GM12878 (cell line): ENCODE measurements at regions of chr5 and their contacts with region 1.

Region 1: GRCh38 chr5:44935262-44935661 is 126.5 kb downstream of the MRPS30 start:
- DNase-seq: no peak
- ATAC-seq: peak; percentile 59
- H3K4me3 ChIP-seq: no peak overlapping the region
- H3K27ac ChIP-seq: no peak overlapping the region
- H3K4me1 ChIP-seq: peaks cover 5% of the 10 kb centered on the region; the same call in 1 of the 2 replicates
- H3K27me3 ChIP-seq: no peaks in the 10 kb centered on the region
- CTCF ChIP-seq: peak; percentile 23 to 39 (median 31); a peak in 5 of 6 replicates
- EP300 ChIP-seq: no peak
- POLR2A ChIP-seq: no peak
- RAD21 ChIP-seq: peak; percentile 52

Region 2: DNA sequence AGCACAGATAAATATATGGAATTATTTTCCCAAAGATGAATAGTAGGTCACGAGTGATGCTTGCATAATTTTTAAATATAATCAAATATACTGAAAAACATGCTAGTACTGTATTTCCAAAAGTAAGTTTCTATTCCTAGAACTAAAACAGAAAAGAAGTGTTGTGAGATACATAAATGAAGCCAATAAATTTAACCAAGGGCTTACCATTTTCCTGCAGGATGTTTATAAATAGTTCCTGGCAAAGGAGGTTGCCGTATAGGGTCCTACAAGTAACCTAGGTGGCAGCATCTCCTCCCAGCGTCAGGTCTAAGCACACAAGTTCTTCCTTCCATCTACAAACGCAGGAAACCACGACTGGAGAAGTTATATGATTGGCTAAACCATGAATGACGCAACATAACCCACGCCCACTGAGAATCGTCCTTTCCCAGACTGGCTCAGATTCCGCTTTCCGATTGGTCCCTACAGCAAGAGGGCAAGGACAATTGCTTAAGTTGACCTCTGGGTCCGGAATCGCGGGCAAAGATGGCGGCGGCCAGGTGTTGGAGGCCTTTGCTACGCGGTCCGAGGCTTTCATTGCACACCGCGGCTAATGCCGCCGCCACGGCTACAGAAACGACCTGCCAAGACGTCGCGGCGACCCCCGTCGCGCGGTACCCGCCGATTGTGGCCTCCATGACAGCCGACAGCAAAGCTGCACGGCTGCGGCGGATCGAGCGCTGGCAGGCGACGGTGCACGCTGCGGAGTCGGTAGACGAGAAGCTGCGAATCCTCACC is 126.6 kb before region 1 on chr5 and contains the start of gene MRPS30:
- CTCF ChIA-PET with region 1: no interaction called
- POLR2A ChIA-PET with region 1: no interaction called
- RAD21 ChIA-PET with region 1: no interaction called
- SMC1A ChIA-PET with region 1: no interaction called
- in situ Hi-C with region 1: no loop called
- intact Hi-C with region 1: loop called (anchors 10 kb)
- DNase-seq: peak; percentile 100
- ATAC-seq: peak; percentile 95
- H3K4me3 ChIP-seq: peak within 1 kb of the TSS; percentile 90
- H3K27ac ChIP-seq: peak within 1 kb of the TSS; percentile 84
- H3K4me1 ChIP-seq: peaks cover 3% of the 10 kb centered on the region; the same call in 1 of the 2 replicates
- H3K27me3 ChIP-seq: no peaks in the 10 kb centered on the region
- CTCF ChIP-seq: peak; percentile 36 to 57 (median 46); a peak in 4 of 6 replicates
- EP300 ChIP-seq: no peak
- POLR2A ChIP-seq: peak; percentile 96
- RAD21 ChIP-seq: no peak; the same call in 1 of the 2 replicates
- polyA plus RNA-seq, gene MRPS30: 18.5 to 19.8 TPM

Region 3: GRCh38 chr5:44909004-44909403 is 26.3 kb before region 1 on chr5:
- CTCF ChIA-PET with region 1: no interaction called
- POLR2A ChIA-PET with region 1: no interaction called
- RAD21 ChIA-PET with region 1: no interaction called
- SMC1A ChIA-PET with region 1: no interaction called
- in situ Hi-C with region 1: no loop called
- intact Hi-C with region 1: no loop called
- DNase-seq: no peak
- ATAC-seq: no peak
- H3K4me3 ChIP-seq: no peak overlapping the region
- H3K27ac ChIP-seq: no peak overlapping the region
- H3K4me1 ChIP-seq: no peaks in the 10 kb centered on the region
- H3K27me3 ChIP-seq: no peaks in the 10 kb centered on the region
- CTCF ChIP-seq: no peak
- EP300 ChIP-seq: no peak
- POLR2A ChIP-seq: no peak
- RAD21 ChIP-seq: no peak

Region 4: GRCh38 chr5:44919560-44919959 is 15.7 kb before region 1 on chr5:
- CTCF ChIA-PET with region 1: no interaction called
- POLR2A ChIA-PET with region 1: no interaction called
- RAD21 ChIA-PET with region 1: no interaction called
- SMC1A ChIA-PET with region 1: no interaction called
- in situ Hi-C with region 1: no loop called
- intact Hi-C with region 1: no loop called
- DNase-seq: no peak
- ATAC-seq: no peak
- H3K4me3 ChIP-seq: no peak overlapping the region
- H3K27ac ChIP-seq: no peak overlapping the region
- H3K4me1 ChIP-seq: no peaks in the 10 kb centered on the region
- H3K27me3 ChIP-seq: no peaks in the 10 kb centered on the region
- CTCF ChIP-seq: no peak
- EP300 ChIP-seq: no peak
- POLR2A ChIP-seq: no peak
- RAD21 ChIP-seq: no peak

Region 5: GRCh38 chr5:45796959-45797553 is 861.8 kb after region 1 on chr5:
- CTCF ChIA-PET with region 1: no interaction called
- POLR2A ChIA-PET with region 1: no interaction called
- RAD21 ChIA-PET with region 1: no interaction called
- SMC1A ChIA-PET with region 1: no interaction called
- in situ Hi-C with region 1: no loop called
- intact Hi-C with region 1: loop called (anchors 10 kb)
- DNase-seq: no peak
- ATAC-seq: no peak
- H3K4me3 ChIP-seq: no peak overlapping the region
- H3K27ac ChIP-seq: no peak overlapping the region
- H3K4me1 ChIP-seq: no peaks in the 10 kb centered on the region
- H3K27me3 ChIP-seq: no peaks in the 10 kb centered on the region
- CTCF ChIP-seq: peak in 2 of 3 experiments; percentile 3 to 40; a peak in 1 of 6 replicates
- EP300 ChIP-seq: no peak
- POLR2A ChIP-seq: no peak
- RAD21 ChIP-seq: peak; percentile 18; the same call in 1 of the 2 replicates